ENCODE measurements at regions of chr21 and their contacts with region 1.

Region 1: GRCh38 chr21:38733973-38734546 is 71.7 kb upstream of the ETS2 start:
- DNase-seq: peak; percentile 94
- ATAC-seq: peak; percentile 93

Region 2: GRCh38 chr21:38897532-38898422 is 163.7 kb after region 1 on chr21:
- intact Hi-C with region 1: loop called (anchors 10 kb)
- DNase-seq: no peak
- ATAC-seq: no peak

Region 3: GRCh38 chr21:39004634-39005501 is 270.8 kb after region 1 on chr21:
- intact Hi-C with region 1: loop called (anchors 10 kb)
- DNase-seq: peak; percentile 83
- ATAC-seq: peak; percentile 79

Region 4: GRCh38 chr21:39071623-39072214 is 337.7 kb after region 1 on chr21:
- intact Hi-C with region 1: no loop called
- DNase-seq: no peak
- ATAC-seq: peak; percentile 31

Region 5: DNA sequence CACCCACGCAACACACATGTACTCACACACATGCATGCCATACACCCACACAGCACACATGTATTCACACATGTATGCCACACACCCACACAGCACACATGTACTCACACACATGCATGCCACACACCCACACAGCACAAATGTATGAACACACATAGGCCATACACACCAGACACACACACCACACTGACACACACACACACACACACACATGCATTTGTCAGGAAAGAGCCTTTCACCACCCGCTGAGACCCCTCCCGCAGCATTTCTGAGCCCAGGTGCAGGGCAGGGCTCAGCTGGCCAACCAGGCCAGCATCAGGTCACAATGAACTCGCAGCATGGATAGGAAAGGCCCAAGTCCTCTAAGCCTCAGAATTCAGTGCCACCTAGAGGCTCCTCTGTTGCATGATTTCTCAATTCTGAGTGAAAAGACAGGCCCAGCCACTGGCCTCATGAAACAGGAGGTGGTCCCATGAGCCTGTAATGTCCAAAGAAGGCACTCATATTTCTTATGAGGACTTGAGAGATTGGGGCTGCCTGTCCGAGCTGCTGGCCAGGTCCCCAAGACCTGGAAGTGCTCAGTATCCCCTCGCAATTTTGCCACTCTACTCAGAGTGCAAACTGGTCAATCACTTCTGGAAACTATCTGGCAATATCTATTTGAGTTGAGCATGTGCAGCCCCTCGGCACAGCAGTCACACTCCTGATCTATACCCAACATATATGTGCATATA is 391.9 kb after region 1 on chr21:
- intact Hi-C with region 1: loop called (anchors 2 kb)
- DNase-seq: peak; percentile 60
- ATAC-seq: peak; percentile 94

Region 6: GRCh38 chr21:39137248-39138178 is 403.5 kb after region 1 on chr21:
- intact Hi-C with region 1: loop called (anchors 1 kb)
- DNase-seq: no peak
- ATAC-seq: no peak

Measured in Right ventricle myocardium inferior (tissue), 1 donor.